ENCODE measurements at regions of chr17 and their contacts with region 1.

Region 1: GRCh38 chr17:3012926-3013581 is 50.4 kb downstream of the OR1D5 start:
- DNase-seq: peak; percentile 71
- ATAC-seq: peak; percentile 90

Region 2: DNA sequence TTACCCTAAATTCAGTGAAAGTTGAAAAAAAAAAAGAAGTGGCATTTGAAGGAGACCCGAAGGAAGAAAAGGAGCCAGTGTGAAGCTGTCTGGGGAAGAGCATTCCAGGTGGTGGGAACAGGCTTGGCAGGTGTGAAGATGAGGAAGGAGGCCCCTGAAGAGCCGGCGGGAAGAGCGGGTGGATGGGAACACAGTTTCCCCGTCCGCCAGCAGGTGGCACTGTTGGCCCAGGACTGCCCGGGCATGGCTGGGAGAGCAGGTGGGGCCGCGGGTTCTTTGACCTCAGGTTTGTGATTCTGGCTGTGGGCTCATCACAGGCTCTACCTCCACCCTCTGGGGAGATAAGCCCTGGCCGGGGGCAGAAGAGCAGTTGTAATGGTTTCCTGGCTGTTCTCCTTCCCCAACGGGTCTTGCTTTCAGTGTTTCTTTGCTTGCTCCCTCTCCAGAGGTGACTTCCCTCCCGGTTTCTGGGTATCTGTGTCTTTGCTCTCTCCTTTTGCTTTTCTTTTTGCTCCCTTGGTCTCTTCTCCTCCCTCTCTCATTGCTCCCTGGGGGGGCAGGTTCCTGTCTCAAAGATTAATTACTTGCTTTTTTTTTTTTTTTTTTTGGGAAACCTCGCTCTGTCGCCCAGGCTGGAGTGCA is 184.5 kb before region 1 on chr17:
- intact Hi-C with region 1: loop called (anchors 5 kb)
- DNase-seq: peak; percentile 85
- ATAC-seq: peak; percentile 92

Measured in left ventricle myocardium superior (tissue), 1 donor.